ENCODE measurements at regions of chr13 and their contacts with region 1.

Region 1: GRCh38 chr13:76016799-76017400 is 380.8 kb downstream of the LMO7 start:
- ATAC-seq: peak in 3 of 8 experiments; percentile 47 to 78 (median 68)
- H3K4me3 ChIP-seq: no peak overlapping the region
- H3K27ac ChIP-seq: no peak overlapping the region
- H3K4me1 ChIP-seq: no peaks in the 10 kb centered on the region

Region 2: DNA sequence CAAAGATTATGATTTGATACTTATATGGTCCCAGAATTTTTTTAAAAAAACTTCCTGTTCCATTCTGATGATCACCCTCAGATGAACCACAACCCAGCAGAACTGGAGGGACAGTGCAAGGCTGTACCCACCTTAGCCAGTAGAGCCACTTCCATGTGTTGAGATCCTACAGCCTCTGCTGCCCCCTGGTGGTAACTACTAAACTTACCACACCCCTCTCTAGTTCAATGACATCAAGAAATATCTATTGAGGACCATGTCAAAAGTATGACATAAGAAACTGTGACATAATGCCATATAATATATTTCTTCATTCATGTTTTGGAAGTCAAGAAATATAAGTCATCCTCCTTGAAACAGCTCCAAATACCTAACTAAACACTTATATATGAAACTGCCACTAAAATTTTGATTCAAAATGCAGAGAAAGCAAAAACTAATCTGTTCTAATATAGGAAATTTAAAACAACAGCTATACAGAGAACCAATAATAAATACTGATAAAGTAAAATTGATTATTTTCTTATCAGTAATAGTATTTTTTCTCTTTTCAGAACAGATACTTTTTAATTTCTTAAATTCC is 456.7 kb after region 1 on chr13:
- in situ Hi-C with region 1: loop called in 1 of 9 experiments (anchors 25 kb)
- ATAC-seq: peak; percentile 80 to 100 (median 94)
- H3K4me3 ChIP-seq: no peak overlapping the region
- H3K27ac ChIP-seq: no peak overlapping the region
- H3K4me1 ChIP-seq: no peaks in the 10 kb centered on the region

Measured in motor neuron (in vitro differentiated cells).